ENCODE measurements at regions of chr1 and their contacts with region 1.

Region 1: DNA sequence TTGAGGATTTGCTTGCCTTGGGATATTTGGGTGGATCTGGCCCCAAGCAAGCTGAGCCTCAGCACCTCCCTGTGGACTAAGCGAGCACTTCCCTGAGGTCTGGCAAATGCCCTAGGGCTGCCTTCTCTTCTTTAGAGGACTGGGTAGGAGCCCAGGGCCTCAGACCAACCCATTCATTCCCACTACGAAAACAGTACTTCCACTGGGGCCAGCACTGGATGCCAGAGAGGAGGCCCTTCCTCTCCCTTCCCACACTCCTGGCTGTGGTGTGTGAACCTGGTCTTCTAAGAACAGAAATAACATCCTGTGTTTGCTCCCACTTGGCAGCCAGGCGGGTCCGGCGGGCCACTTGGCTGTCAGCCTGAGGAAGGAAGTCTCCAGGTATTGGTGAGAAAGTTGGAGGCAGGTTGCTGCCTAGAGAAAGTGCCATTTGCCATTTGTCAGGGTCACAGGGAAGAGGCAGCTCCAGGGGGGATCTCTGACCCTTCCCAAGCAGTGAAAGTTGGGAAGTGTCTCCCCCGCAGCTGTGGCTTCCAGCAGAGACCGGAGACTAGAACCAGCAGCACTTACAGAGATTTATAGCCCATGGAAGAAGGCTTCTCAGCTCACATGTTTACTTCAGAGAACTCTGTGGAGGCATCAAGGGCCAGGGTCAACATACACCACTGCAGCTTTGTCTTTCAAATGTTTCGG is 323.5 kb downstream of the SIPA1L2 start:
- DNase-seq: peak; percentile 46 to 71 (median 67)
- ATAC-seq: peak; percentile 67 to 96 (median 82)
- H3K4me3 ChIP-seq: no peak overlapping the region
- H3K27ac ChIP-seq: peak overlapping the region in 9 of 12 donors; percentile 2 to 71 (median 44)
- H3K4me1 ChIP-seq: peaks cover 0 to 27% (median 14%) of the 10 kb centered on the region in 12 donors
- H3K27me3 ChIP-seq: no peaks in the 10 kb centered on the region
- CTCF ChIP-seq: peak; percentile 10 to 66 (median 46)
- POLR2A ChIP-seq: no peak

Region 2: DNA sequence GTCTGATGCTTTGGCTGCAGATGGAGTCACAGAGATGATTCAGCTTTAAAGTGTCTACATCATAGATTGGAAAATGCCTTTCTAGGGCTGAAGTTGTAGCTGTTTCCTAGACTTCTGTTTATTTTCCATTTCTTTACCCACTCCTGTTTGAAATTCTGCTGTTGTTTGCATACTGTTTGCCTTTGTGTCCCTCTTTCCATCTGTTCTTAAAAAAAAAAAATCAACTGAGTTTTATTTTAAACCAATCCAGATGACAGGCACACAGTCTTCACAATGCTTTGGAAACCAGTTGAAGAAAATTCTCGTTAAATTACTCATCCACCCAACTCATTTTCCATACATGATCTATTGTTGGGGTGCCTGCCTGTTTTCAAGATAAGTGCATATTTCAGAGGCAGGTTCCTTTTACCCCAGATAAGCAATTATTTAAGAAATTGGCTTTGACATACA is 433.9 kb before region 1 on chr1:
- intact Hi-C with region 1: loop called in 7 of 10 experiments (anchors 5 to 10 kb)
- DNase-seq: no peak
- ATAC-seq: no peak
- H3K4me3 ChIP-seq: no peak overlapping the region
- H3K27ac ChIP-seq: no peak overlapping the region
- H3K4me1 ChIP-seq: peaks cover under 1 to 17% (median 6%) of the 10 kb centered on the region in 12 donors
- H3K27me3 ChIP-seq: no peaks in the 10 kb centered on the region
- CTCF ChIP-seq: no peak
- POLR2A ChIP-seq: no peak

Region 3: DNA sequence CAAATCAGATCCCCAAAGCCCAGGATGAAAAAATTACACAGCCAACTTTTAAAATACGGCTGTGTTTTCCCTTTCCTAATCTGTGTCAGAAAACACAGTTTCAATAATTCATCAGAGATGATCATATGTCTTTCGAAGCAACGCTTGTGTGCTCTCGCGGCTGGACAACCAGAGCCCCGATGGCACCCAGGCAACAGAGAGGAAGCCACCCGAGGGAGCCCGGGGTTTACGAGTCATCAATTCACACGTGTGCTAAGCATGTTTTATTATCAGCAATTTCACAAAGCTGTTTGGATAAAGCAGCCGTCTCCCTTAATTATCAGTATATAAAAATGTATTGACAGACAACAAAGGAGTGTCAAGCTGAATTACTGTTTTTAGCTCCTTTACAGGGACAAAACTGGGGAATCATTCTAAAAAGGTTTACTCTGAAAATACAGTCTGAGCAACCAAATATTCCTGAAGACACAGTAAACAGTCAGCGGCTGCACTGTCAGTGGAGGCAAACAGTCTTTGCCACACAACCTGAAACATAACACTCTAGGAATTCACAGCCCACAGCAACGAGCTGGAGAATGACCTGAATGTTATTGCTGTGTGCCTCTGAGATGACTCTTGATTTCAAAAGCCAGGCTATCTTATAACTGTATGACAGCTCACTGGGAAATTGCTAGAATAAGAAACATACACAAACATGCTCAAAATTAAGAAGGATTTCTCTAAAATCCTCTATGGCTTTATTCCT is 122.5 kb after region 1 on chr1:
- intact Hi-C with region 1: loop called in 1 of 10 experiments (anchors 5 kb)
- DNase-seq: no peak
- ATAC-seq: peak in 3 of 4 donors; percentile 44 to 62 (median 48)
- H3K4me3 ChIP-seq: no peak overlapping the region
- H3K27ac ChIP-seq: peak overlapping the region in 8 of 12 donors; percentile 22 to 68 (median 39)
- H3K4me1 ChIP-seq: peaks cover 0 to 65% (median 26%) of the 10 kb centered on the region in 12 donors
- H3K27me3 ChIP-seq: no peaks in the 10 kb centered on the region
- CTCF ChIP-seq: no peak
- POLR2A ChIP-seq: no peak